WTC11 (cell line): ENCODE measurements at regions of chr2 and their contacts with region 1.

Region 1: GRCh38 chr2:147639891-147640290 is 204.9 kb upstream of the ACVR2A start:
- DNase-seq: no peak
- ATAC-seq: no peak
- H3K4me3 Mint-ChIP-seq: no peak overlapping the region
- H3K27ac Mint-ChIP-seq: no peak overlapping the region
- H3K4me1 Mint-ChIP-seq: peaks cover 9% of the 10 kb centered on the region
- H3K27me3 Mint-ChIP-seq: no peaks in the 10 kb centered on the region
- CTCF ChIP-seq: no peak

Region 2: GRCh38 chr2:147467441-147467840 is 172.4 kb before region 1 on chr2:
- CTCF ChIA-PET with region 1: no interaction called
- POLR2A ChIA-PET with region 1: interaction called, 11 read pairs
- DNase-seq: no peak
- ATAC-seq: no peak
- H3K4me3 Mint-ChIP-seq: no peak overlapping the region
- H3K27ac Mint-ChIP-seq: peak overlapping the region; percentile 5
- H3K4me1 Mint-ChIP-seq: peaks cover 53% of the 10 kb centered on the region
- H3K27me3 Mint-ChIP-seq: peaks cover 11% of the 10 kb centered on the region
- CTCF ChIP-seq: no peak

Region 3: GRCh38 chr2:147657086-147658000 is 17.5 kb after region 1 on chr2:
- CTCF ChIA-PET with region 1: no interaction called
- POLR2A ChIA-PET with region 1: no interaction called
- DNase-seq: no peak
- ATAC-seq: no peak
- H3K4me3 Mint-ChIP-seq: no peak overlapping the region
- H3K27ac Mint-ChIP-seq: no peak overlapping the region
- H3K4me1 Mint-ChIP-seq: no peaks in the 10 kb centered on the region
- H3K27me3 Mint-ChIP-seq: no peaks in the 10 kb centered on the region
- CTCF ChIP-seq: no peak

Region 4: DNA sequence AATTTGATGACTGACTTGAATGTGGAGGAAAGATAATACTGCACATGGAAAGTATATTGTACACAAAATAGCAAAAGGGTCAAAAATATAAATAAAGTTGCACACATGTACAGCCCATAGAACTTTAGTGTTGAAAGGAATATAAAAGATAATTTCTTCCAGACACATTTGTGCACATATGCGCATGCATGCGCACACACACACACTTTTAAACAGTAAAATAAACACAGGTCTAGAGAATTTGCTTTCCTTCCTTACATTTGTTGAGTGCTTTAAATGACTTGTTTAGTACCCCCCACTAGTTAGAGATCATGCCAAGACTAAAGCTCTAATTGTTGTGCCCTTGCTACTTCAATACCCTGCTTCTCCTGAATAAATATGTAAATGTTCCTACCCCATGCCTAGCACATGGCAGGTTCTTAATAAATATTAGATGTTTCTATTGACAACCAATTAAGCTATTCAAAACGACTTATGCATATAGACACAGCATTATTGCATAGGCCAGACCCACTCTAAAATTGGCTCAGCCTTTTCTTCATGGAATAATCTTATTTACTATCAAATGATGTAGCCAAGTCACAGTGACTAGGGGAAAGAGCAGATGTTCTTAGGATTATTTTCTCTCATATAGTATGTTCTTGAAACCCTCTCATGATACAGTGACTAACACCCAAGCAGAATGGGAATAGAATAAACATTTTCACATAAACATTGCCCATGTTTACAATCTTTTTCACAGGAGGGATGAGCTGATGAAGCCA is 39.5 kb after region 1 on chr2:
- CTCF ChIA-PET with region 1: no interaction called
- POLR2A ChIA-PET with region 1: no interaction called
- DNase-seq: no peak
- ATAC-seq: no peak
- H3K4me3 Mint-ChIP-seq: no peak overlapping the region
- H3K27ac Mint-ChIP-seq: no peak overlapping the region
- H3K4me1 Mint-ChIP-seq: peaks cover 19% of the 10 kb centered on the region
- H3K27me3 Mint-ChIP-seq: no peaks in the 10 kb centered on the region
- CTCF ChIP-seq: no peak